Common myeloid progenitor, CD34-positive (primary cell): ENCODE measurements at regions of chr12 and their contacts with region 1.

Region 1: DNA sequence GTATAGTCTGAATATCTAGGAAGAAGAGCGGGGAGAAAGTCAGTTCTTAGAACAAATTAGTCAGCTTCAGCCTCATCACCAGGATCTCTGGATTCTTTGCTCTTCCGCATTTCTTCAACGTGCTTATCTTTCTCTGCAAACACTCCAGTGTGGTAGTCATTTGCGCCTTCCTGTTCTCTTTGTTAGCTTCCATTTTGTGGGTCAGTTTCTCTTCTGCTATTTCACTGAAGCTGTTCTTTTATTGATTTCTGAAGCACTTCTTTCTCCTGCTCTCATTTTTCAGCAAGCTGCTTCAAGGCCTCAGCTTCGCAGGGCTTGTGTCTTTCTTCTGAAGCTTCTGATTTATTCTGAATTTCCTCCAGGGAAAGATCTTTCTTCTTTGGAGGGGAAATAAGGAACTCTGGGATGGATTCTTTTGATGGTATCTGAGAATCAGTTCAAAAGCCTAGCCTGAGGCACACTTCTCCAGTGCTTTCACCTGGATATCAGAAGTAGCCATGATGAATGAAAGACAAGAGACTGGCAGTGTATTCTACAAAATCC is 13.5 kb downstream of the AMN1 start:
- DNase-seq: peak; percentile 87 to 98 (median 94)
- H3K4me3 ChIP-seq: peak overlapping the region in 6 of 7 experiments; percentile 20 to 65 (median 32)
- H3K27ac ChIP-seq: peak overlapping the region; percentile 88 to 93
- H3K4me1 ChIP-seq: peaks cover 9 to 15% (median 14%) of the 10 kb centered on the region in 4 experiments
- H3K27me3 ChIP-seq: no peaks in the 10 kb centered on the region

Region 2: GRCh38 chr12:31702047-31702446 is 13.3 kb before region 1 on chr12:
- CTCF ChIA-PET with region 1: interaction called, 11 read pairs
- POLR2A ChIA-PET with region 1: no interaction called
- DNase-seq: peak; percentile 21 to 45 (median 23)
- H3K4me3 ChIP-seq: no peak overlapping the region
- H3K27ac ChIP-seq: no peak overlapping the region
- H3K4me1 ChIP-seq: no peaks in the 10 kb centered on the region
- H3K27me3 ChIP-seq: no peaks in the 10 kb centered on the region

Region 3: GRCh38 chr12:31728917-31729640 is 13.7 kb after region 1 on chr12 and contains the start of gene AMN1:
- CTCF ChIA-PET with region 1: interaction called, 13 read pairs
- POLR2A ChIA-PET with region 1: interaction called, 5 read pairs
- DNase-seq: peak; percentile 100
- H3K4me3 ChIP-seq: peak within 1 kb of the TSS; percentile 60 to 98 (median 87)
- H3K27ac ChIP-seq: peak within 1 kb of the TSS; percentile 82 to 92
- H3K4me1 ChIP-seq: peaks cover 19 to 45% (median 30%) of the 10 kb centered on the region in 4 experiments
- H3K27me3 ChIP-seq: no peaks in the 10 kb centered on the region

Region 4: DNA sequence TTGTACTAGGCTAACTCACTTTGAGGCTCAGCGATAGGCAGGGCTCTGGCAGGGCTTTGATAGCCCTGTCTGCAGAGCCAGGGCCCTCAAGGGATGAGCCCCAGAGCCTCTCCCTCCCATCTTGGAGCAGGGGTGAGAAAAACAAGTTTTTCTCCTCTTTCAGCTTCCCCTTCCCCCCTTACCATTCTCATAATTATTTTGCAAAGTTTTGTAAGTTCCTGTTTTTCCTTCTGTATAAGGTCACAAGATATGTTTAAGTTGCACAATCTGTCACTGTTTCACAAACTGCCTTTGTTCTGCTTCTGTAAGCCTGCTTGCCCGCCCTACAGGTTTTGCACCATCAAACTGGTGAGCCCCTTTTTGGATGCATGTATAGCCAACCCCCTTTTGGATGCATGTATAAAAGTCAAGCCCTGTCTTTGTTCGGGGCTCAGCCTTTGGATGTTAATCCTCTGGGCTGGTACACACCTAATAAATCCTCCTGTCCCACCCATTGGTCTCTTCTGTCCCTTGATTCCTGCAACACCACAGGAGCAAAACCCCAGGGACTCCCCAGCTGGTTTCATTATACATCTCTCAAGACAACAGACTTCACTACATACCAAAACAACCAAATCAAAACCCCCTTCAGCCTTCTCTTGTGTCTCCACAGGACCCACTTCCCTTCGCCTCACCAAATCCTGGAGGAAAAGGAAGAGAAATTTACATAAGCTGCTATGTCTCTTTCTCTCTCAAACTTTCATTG is 191.4 kb after region 1 on chr12:
- CTCF ChIA-PET with region 1: no interaction called
- POLR2A ChIA-PET with region 1: no interaction called
- DNase-seq: peak in 2 of 3 donors; percentile 57 to 72
- H3K4me3 ChIP-seq: no peak overlapping the region
- H3K27ac ChIP-seq: no peak overlapping the region
- H3K4me1 ChIP-seq: peaks cover 0 to 14% (median 0%) of the 10 kb centered on the region in 4 experiments
- H3K27me3 ChIP-seq: no peaks in the 10 kb centered on the region